Calu3 (cell line): ENCODE measurements at regions of chr2 and their contacts with region 1.

Region 1: DNA sequence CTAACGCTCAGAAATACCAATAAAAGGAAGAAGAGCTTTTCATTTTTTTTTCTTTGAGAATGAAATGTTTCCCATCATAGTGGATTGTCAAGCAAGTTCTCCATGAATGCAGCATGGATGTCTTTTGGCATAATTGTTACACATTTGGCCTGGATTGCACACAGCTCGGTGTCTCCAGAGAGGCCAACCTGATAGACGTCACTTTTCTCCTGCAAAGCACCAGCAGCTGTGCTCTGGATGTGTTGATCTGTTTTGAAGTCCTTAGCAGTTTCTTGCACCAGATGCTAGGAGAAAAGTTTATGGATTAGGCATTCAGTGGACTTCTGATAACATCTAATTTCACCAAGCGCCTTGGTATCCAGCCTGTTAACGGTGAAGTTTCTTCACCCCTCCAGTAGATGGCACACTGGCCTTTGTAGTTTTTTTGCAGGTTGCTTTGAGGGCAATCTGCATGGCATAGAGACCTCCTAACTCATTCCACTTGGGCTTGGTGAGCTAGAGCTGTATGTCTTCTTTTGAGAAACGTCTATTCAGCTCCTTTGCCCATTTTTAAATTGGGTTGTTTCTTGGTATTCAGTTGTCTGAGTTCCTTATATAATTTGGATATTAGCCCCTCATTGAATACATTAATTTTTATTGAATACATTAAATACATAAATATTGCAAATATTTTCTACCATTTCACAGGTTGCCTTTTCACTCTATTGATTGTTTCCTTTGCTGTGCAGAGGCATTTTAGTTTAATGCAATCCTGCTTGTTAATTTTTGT is 59.7 kb downstream of the PTH2R start:
- DNase-seq: peak; percentile 70
- H3K4me3 Mint-ChIP-seq: no peak overlapping the region
- H3K27ac Mint-ChIP-seq: no peak overlapping the region
- H3K4me1 Mint-ChIP-seq: peaks cover 19% of the 10 kb centered on the region
- H3K27me3 Mint-ChIP-seq: no peaks in the 10 kb centered on the region
- CTCF ChIP-seq: peak; percentile 74

Region 2: DNA sequence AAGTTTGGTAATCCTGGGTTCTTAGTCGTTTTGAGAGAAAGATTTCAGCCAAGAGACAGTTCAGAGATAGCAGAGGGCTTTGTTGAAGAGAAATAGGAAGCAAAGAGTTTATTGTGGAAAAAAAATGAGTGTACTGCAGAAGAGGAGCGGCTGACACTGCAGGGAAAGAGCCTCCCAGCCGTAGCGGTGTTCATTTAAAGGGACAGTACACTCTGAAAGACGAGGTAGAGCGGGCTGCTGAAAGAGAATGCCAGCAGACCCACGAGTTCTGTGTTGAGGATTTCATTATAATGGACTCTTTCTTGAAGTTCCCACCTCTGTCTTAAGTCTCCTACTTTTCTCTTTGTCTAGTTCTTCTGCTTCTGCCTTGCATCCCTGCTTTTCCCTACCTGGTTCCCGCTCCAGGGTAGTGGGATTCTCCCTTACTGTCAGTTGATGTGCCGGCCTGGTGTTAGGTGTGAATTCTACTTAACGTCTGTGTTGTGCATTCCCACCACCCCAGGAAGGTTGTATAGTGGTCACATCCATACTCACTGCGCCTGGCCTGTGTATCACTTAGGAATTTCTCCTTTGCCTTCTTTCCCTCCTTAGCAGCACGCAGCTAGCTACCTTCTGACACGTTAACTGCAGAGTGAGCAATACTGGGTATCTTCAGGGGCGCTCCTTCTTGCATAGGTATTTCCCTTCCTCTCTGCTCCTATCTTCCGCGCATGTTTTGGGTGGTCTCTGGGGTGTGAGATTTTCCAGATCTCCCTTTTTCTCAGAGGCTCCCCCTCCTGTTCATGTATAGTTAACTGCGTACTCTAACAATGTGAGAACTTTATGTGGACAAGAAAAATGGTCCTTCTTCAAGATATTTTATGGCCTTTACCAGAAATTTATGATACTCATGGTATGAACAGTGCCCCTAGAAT is 104.8 kb after region 1 on chr2:
- CTCF ChIA-PET with region 1: interaction called, 4 read pairs
- intact Hi-C with region 1: loop called (anchors 1 kb)
- DNase-seq: no peak
- H3K4me3 Mint-ChIP-seq: peak overlapping the region; percentile 43
- H3K27ac Mint-ChIP-seq: no peak overlapping the region
- H3K4me1 Mint-ChIP-seq: peaks cover 15% of the 10 kb centered on the region
- H3K27me3 Mint-ChIP-seq: peaks cover 14% of the 10 kb centered on the region
- CTCF ChIP-seq: no peak

Region 3: DNA sequence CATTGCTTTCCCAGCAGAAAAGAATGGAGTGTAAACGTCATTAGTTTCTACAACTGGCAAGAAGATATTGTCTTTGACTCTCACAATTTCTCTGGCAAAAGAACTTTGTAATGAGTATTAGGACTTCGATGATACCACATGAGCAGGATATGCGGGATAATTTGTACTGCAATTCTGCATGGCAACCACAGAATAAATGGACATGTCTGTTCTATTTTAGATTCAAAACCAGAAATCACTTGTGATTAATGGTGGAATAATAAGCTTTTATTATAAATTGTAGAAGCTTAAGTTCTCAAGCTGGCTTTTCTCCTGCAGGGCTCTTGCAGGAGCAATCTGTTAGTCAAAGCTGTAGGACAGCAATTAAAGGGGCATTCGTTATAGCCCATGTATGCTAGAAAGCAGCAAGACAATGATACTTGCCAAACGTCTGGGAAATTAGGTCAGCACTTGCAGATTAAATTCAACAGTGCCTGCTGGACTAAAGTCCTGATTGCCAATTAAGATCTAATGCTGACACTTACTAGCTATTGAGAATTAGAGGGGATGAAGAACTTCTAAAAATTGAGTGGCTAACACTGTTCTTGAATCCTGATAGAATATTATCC is 118.1 kb after region 1 on chr2:
- CTCF ChIA-PET with region 1: no interaction called
- intact Hi-C with region 1: no loop called
- DNase-seq: no peak
- H3K4me3 Mint-ChIP-seq: no peak overlapping the region
- H3K27ac Mint-ChIP-seq: no peak overlapping the region
- H3K4me1 Mint-ChIP-seq: no peaks in the 10 kb centered on the region
- H3K27me3 Mint-ChIP-seq: no peaks in the 10 kb centered on the region
- CTCF ChIP-seq: no peak

Region 4: GRCh38 chr2:208657468-208657867 is 191.1 kb after region 1 on chr2:
- CTCF ChIA-PET with region 1: no interaction called
- intact Hi-C with region 1: loop called (anchors 2 kb)
- DNase-seq: peak; percentile 5
- H3K4me3 Mint-ChIP-seq: no peak overlapping the region
- H3K27ac Mint-ChIP-seq: no peak overlapping the region
- H3K4me1 Mint-ChIP-seq: no peaks in the 10 kb centered on the region
- H3K27me3 Mint-ChIP-seq: no peaks in the 10 kb centered on the region
- CTCF ChIP-seq: no peak

Region 5: GRCh38 chr2:208783187-208783586 is 316.9 kb after region 1 on chr2:
- CTCF ChIA-PET with region 1: interaction called, 7 read pairs
- intact Hi-C with region 1: loop called (anchors 2 kb)
- DNase-seq: peak; percentile 11
- H3K4me3 Mint-ChIP-seq: no peak overlapping the region
- H3K27ac Mint-ChIP-seq: no peak overlapping the region
- H3K4me1 Mint-ChIP-seq: no peaks in the 10 kb centered on the region
- H3K27me3 Mint-ChIP-seq: no peaks in the 10 kb centered on the region
- CTCF ChIP-seq: no peak

Region 6: DNA sequence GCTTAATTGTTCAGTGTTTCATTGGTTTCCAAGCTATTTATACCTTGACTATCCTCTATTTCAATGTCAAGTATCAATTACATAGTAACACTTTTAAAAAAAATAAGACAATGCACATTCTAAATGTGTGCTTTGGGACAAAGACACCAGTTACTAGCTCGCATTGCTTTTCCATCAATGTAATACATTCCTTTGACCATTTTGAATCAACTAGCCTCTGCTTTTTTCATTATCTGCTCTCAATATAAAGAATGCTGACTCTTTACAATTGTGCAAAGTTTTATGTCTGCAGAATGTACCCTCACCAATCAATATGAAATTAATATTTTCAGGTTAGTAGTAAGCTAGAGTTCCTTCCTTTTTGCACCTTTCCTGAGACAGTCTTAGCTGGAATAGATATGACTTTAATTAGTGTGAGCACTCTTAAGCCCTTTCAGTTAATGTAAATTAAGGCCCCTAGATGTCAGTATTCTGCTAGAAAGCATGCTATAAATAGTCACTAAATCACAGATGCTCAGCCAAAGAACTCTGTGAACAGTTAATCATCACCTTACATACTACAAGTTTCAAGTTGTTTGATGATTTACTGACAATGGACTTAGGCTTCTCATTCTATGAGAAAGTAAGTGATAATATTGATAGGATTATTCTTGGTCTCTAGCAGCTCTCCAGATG is 353.8 kb after region 1 on chr2:
- CTCF ChIA-PET with region 1: no interaction called
- intact Hi-C with region 1: loop called (anchors 5 kb)
- DNase-seq: no peak
- H3K4me3 Mint-ChIP-seq: no peak overlapping the region
- H3K27ac Mint-ChIP-seq: no peak overlapping the region
- H3K4me1 Mint-ChIP-seq: peaks cover 8% of the 10 kb centered on the region
- H3K27me3 Mint-ChIP-seq: no peaks in the 10 kb centered on the region
- CTCF ChIP-seq: peak; percentile 28

Region 7: GRCh38 chr2:209208211-209208610 is 741.9 kb after region 1 on chr2:
- CTCF ChIA-PET with region 1: interaction called, 3 read pairs
- intact Hi-C with region 1: loop called (anchors 1 kb)
- DNase-seq: peak; percentile 63
- H3K4me3 Mint-ChIP-seq: peak overlapping the region; percentile 54
- H3K27ac Mint-ChIP-seq: peak overlapping the region; percentile 31
- H3K4me1 Mint-ChIP-seq: peaks cover 8% of the 10 kb centered on the region
- H3K27me3 Mint-ChIP-seq: no peaks in the 10 kb centered on the region
- CTCF ChIP-seq: peak; percentile 81

Region 8: DNA sequence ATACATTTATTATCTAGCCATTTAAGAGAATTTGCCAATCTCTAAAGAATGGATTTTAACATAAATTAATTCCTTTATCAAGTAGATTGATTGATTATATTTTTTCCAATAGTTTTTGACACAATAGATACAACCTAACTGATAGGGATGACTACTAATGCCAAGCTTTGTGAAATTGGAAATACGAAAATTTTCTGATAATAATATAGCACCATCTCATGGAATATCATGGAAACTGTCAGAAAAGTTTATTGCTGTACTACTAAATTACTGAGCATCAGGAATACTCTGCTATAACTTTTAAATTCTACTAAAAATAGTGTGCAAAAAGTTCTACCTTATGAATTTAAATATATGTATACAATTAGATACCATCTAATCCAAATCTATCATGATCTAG is 855.7 kb after region 1 on chr2:
- CTCF ChIA-PET with region 1: interaction called, 3 read pairs
- intact Hi-C with region 1: loop called (anchors 5 kb)
- DNase-seq: no peak
- H3K4me3 Mint-ChIP-seq: no peak overlapping the region
- H3K27ac Mint-ChIP-seq: no peak overlapping the region
- H3K4me1 Mint-ChIP-seq: peaks cover 14% of the 10 kb centered on the region
- H3K27me3 Mint-ChIP-seq: no peaks in the 10 kb centered on the region
- CTCF ChIP-seq: no peak